ENCODE measurements at regions of chr11 and their contacts with region 1.

Region 1: GRCh38 chr11:134253188-134253993 is at the starts of genes ACAD8 and THYN1:
- DNase-seq: peak; percentile 97
- H3K4me3 Mint-ChIP-seq: peak within 1 kb of the TSS; percentile 89
- H3K27ac Mint-ChIP-seq: peak within 1 kb of the TSS; percentile 89
- H3K4me1 Mint-ChIP-seq: peaks cover 40% of the 10 kb centered on the region
- H3K27me3 Mint-ChIP-seq: no peaks in the 10 kb centered on the region
- total RNA-seq, gene ACAD8: 20.9 to 22.1 TPM
- total RNA-seq, gene THYN1: 74.0 to 74.3 TPM

Region 2: GRCh38 chr11:133947321-133947756 is 306.1 kb before region 1 on chr11:
- CTCF ChIA-PET with region 1: no interaction called
- POLR2A ChIA-PET with region 1: no interaction called
- intact Hi-C with region 1: loop called (anchors 5 kb)
- DNase-seq: peak; percentile 83
- H3K4me3 Mint-ChIP-seq: peak overlapping the region; percentile 33
- H3K27ac Mint-ChIP-seq: peak overlapping the region; percentile 42
- H3K4me1 Mint-ChIP-seq: peaks cover 67% of the 10 kb centered on the region
- H3K27me3 Mint-ChIP-seq: no peaks in the 10 kb centered on the region

Region 3: DNA sequence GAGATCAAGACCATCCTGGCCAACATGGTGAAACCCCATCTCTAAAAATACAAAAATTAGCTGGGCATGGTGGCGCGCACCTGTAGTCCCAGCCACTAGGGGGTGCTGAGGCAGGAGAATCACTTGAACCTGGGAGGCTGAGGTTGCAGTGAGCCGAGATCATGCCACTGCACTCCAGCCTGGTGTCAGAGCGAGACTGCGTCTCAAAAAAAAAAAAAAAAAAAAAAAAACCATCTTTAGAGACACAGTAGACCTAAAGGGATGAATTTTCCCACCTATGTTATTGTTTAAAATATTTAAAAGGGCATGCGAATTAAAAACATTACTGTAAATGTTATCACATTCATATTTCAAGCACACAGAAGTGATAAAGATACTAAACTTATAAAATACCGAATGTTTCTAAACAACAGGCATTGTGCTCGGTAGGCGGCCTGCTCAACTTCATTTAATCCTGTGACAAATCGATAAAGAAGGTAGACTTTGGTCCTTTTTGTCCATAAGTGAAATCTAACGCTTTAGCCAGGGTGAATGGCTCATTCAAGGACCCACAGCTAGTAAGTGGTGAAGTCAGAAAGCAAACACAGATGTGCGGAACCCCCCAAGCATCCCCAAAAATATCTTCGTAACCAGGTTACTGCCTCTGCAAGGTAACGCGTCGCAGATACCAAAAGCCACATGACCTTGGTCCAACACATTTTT is 45.7 kb before region 1 on chr11:
- CTCF ChIA-PET with region 1: interaction called, 3 read pairs
- POLR2A ChIA-PET with region 1: interaction called, 3 read pairs
- intact Hi-C with region 1: loop called (anchors 1 kb)
- DNase-seq: peak; percentile 76
- H3K4me3 Mint-ChIP-seq: no peak overlapping the region
- H3K27ac Mint-ChIP-seq: no peak overlapping the region
- H3K4me1 Mint-ChIP-seq: peaks cover 2% of the 10 kb centered on the region
- H3K27me3 Mint-ChIP-seq: no peaks in the 10 kb centered on the region

Region 4: DNA sequence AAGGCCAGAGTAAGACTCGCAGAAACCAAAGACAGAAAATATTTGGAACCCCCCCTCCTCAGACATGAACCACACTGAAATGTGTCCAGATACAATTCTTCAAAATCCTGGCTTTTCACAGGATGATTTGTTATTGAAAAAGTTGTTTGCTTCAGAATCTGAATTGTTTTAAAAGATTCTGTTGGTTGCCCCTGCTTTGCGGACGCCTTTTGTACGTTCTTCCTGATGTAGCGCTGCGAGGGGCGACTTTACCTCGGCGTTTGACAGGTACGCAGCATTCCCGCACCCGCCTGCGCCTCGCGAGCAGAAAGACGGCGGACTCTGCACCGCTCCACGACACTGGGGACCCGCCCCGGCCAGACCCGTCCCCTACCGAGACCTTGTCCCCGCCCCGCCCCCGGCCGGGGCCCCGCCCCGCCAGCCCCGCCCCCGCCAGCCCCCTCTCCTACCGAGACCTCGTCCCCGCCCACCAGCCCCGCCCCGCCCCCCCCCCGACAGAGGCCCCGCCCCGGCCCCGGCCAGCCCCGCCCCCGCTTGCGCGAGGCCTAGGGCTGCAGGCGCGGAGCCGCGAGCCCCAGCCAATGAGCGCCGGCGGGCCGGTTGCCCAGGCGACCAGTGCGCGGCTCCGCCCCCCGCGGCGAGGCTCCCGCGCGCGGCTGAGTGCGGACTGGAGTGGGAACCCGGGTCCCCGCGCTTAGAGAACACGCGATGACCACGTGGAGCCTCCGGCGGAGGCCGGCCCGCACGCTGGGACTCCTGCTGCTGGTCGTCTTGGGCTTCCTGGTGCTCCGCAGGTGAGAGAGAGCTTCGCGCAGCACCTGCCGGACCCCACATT is 78.2 kb after region 1 on chr11 and contains the start of gene GLB1L2:
- CTCF ChIA-PET with region 1: no interaction called
- POLR2A ChIA-PET with region 1: no interaction called
- intact Hi-C with region 1: loop called (anchors 1 kb)
- DNase-seq: peak; percentile 82
- H3K4me3 Mint-ChIP-seq: peak within 1 kb of the TSS; percentile 67
- H3K27ac Mint-ChIP-seq: no peak within 1 kb of the TSS
- H3K4me1 Mint-ChIP-seq: peaks cover 10% of the 10 kb centered on the region
- H3K27me3 Mint-ChIP-seq: peaks cover 20% of the 10 kb centered on the region
- total RNA-seq, gene GLB1L2: 3.8 to 4.1 TPM